Activated CD4-positive, alpha-beta T cell treated with anti-CD3 and anti-CD28 coated beads for 36 hours (primary cell): ENCODE measurements at regions of chr5 and their contacts with region 1.

Region 1: GRCh38 chr5:131180407-131180806 is 9.7 kb downstream of the LYRM7 start:
- DNase-seq: no peak
- ATAC-seq: no peak
- H3K4me3 Mint-ChIP-seq: no peak overlapping the region
- H3K27ac Mint-ChIP-seq: no peak overlapping the region
- H3K4me1 Mint-ChIP-seq: peaks cover 15% of the 10 kb centered on the region
- H3K27me3 Mint-ChIP-seq: no peaks in the 10 kb centered on the region

Region 2: GRCh38 chr5:131194725-131195124 is 14.3 kb after region 1 on chr5:
- CTCF ChIA-PET with region 1: interaction called, 3 read pairs
- POLR2A ChIA-PET with region 1: no interaction called
- intact Hi-C with region 1: loop called in 1 of 2 experiments (anchors 2 kb)
- DNase-seq: no peak
- ATAC-seq: no peak
- H3K4me3 Mint-ChIP-seq: no peak overlapping the region
- H3K27ac Mint-ChIP-seq: no peak overlapping the region
- H3K4me1 Mint-ChIP-seq: peaks cover 10% of the 10 kb centered on the region
- H3K27me3 Mint-ChIP-seq: no peaks in the 10 kb centered on the region

Region 3: DNA sequence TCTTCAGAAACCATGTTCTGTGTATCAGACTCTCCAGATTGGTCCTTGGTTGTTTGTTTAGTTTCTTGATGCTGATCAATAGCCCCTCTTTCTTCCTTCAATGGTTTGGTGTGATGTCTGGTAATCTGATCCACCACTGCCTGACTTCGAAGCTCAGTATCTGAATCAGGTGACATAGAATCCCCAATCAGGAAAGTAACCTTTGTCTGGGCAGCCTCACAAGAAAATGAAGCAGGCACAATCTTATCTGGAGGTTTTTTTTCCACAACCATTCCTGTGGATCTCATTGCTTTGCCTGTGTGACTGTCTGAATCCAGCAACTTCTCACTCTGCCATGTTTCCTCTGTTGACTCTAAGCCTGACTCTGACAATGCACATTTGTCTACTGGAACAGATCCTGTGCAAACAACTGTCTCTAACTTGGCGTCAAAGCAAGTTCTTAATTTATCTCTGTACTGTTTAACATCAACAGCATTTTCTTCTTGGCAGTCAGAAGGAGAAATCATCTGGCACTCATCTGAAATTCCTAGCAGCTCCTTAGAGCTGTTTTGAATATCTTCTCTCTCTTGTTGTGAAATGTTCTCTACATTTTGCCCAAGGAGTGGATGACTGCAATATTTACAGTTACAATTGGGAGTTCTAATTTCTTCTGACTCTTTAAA is 491.7 kb after region 1 on chr5:
- CTCF ChIA-PET with region 1: no interaction called
- POLR2A ChIA-PET with region 1: no interaction called
- intact Hi-C with region 1: no loop called
- DNase-seq: no peak
- ATAC-seq: no peak
- H3K4me3 Mint-ChIP-seq: no peak overlapping the region
- H3K27ac Mint-ChIP-seq: peak overlapping the region; percentile 16
- H3K4me1 Mint-ChIP-seq: peaks cover 27% of the 10 kb centered on the region
- H3K27me3 Mint-ChIP-seq: no peaks in the 10 kb centered on the region